ENCODE measurements at regions of chr15 and their contacts with region 1.

Region 1: DNA sequence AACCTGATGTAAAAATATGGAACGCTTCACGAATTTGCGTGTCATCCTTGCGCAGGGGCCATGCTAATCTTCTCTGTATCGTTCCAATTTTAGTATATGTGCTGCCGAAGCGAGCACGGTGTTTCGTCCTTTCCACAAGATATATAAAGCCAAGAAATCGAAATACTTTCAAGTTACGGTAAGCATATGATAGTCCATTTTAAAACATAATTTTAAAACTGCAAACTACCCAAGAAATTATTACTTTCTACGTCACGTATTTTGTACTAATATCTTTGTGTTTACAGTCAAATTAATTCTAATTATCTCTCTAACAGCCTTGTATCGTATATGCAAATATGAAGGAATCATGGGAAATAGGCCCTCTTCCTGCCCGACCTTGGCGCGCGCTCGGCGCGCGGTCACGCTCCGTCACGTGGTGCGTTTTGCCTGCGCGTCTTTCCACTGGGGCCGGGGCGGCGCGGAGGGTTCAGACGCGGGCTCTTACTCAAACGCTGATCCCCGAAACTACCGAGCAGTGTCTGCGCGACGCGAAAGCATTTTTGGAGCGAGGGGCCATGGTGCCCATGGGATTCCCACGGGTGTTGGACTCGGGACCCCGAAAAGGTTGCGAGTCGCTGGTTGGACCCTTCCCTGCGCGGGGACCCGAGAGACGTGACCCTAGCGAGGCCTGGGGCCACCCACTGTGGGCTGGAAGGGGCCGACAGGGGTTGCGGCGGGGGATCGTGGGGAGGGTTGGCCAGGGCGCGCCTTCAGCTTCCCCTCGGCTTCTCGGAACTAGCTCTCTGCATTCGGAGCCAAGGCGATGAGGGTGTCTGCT is at the start of gene RNU6-1:
- DNase-seq: peak; percentile 81
- ATAC-seq: peak; percentile 91
- H3K4me3 ChIP-seq: peak within 1 kb of the TSS; percentile 59 to 72
- H3K27ac ChIP-seq: peak within 1 kb of the TSS; percentile 47
- H3K4me1 ChIP-seq: peaks cover 5 to 33% of the 10 kb centered on the region in 2 experiments; a peak in 3 of 4 replicates
- H3K27me3 ChIP-seq: no peaks in the 10 kb centered on the region
- CTCF ChIP-seq: no peak
- POLR2A ChIP-seq: no peak
- RAD21 ChIP-seq: no peak
- total RNA-seq, gene RNU6-1: not detected

Region 2: GRCh38 chr15:67240235-67241131 is 599.7 kb before region 1 on chr15:
- CTCF ChIA-PET with region 1: no interaction called
- POLR2A ChIA-PET with region 1: no interaction called
- RAD21 ChIA-PET with region 1: no interaction called
- intact Hi-C with region 1: loop called (anchors 10 kb)
- DNase-seq: peak; percentile 21
- ATAC-seq: peak; percentile 89
- H3K4me3 ChIP-seq: no peak overlapping the region
- H3K27ac ChIP-seq: no peak overlapping the region
- H3K4me1 ChIP-seq: peaks cover 3 to 10% of the 10 kb centered on the region in 2 experiments; a peak in 3 of 4 replicates
- H3K27me3 ChIP-seq: no peaks in the 10 kb centered on the region
- CTCF ChIP-seq: peak; percentile 41 to 72 (median 46); a peak in 5 of 6 replicates
- POLR2A ChIP-seq: no peak
- RAD21 ChIP-seq: peak; percentile 68

Region 3: GRCh38 chr15:67383899-67384298 is 456.2 kb before region 1 on chr15:
- CTCF ChIA-PET with region 1: no interaction called
- POLR2A ChIA-PET with region 1: no interaction called
- RAD21 ChIA-PET with region 1: no interaction called
- intact Hi-C with region 1: loop called (anchors 10 kb)
- DNase-seq: no peak
- ATAC-seq: no peak
- H3K4me3 ChIP-seq: no peak overlapping the region
- H3K27ac ChIP-seq: no peak overlapping the region
- H3K4me1 ChIP-seq: no peaks in the 10 kb centered on the region
- H3K27me3 ChIP-seq: no peaks in the 10 kb centered on the region
- CTCF ChIP-seq: peak; percentile 17 to 31 (median 19); a peak in 2 of 6 replicates
- POLR2A ChIP-seq: no peak
- RAD21 ChIP-seq: peak; percentile 44

Region 4: DNA sequence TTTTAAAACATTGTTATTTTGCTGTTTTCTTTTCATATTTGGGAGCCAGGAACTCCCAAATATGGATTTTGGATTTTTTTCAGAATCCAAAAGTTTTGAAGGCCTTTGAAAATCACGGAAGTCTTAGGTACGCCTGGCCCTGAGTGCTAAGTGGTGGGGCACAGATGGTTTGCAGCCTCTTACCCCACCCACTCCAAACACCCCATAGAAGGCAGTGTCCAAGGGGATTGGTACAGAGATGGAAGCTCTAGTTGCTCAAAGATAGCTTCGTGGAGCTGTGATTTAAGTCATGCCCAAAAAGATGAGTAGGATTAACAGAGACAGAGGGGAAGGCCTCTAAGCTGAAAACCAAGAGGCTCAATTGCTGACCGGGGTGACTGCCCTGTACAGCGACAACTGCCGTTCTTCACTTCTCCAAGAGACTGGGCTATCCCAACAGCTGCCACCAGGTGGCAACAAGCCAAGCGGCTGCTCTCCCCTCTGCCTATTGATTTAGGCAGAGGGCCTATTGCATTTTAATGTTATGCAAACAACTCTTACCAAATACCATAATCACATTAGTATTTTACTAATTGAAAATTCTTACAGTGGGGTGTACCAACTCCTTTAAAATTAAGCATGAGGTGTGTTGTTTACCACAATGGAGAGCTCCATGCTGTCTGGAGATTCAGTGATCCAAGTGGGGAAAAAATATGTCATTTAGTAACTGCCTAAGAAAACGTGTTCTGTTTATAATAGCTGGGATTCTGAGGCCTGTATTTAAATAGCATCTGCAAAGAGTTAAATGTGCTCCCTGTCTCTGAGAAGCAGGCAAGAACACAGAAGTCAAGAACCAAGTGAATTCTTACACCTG is 383.2 kb before region 1 on chr15:
- CTCF ChIA-PET with region 1: interaction called, 6 read pairs
- POLR2A ChIA-PET with region 1: no interaction called
- RAD21 ChIA-PET with region 1: no interaction called
- intact Hi-C with region 1: loop called (anchors 1 kb)
- DNase-seq: peak; percentile 42
- ATAC-seq: peak; percentile 99
- H3K4me3 ChIP-seq: no peak overlapping the region
- H3K27ac ChIP-seq: no peak overlapping the region
- H3K4me1 ChIP-seq: no peaks in the 10 kb centered on the region
- H3K27me3 ChIP-seq: no peaks in the 10 kb centered on the region
- CTCF ChIP-seq: peak; percentile 71 to 95 (median 93)
- POLR2A ChIP-seq: no peak
- RAD21 ChIP-seq: peak; percentile 75

Region 5: DNA sequence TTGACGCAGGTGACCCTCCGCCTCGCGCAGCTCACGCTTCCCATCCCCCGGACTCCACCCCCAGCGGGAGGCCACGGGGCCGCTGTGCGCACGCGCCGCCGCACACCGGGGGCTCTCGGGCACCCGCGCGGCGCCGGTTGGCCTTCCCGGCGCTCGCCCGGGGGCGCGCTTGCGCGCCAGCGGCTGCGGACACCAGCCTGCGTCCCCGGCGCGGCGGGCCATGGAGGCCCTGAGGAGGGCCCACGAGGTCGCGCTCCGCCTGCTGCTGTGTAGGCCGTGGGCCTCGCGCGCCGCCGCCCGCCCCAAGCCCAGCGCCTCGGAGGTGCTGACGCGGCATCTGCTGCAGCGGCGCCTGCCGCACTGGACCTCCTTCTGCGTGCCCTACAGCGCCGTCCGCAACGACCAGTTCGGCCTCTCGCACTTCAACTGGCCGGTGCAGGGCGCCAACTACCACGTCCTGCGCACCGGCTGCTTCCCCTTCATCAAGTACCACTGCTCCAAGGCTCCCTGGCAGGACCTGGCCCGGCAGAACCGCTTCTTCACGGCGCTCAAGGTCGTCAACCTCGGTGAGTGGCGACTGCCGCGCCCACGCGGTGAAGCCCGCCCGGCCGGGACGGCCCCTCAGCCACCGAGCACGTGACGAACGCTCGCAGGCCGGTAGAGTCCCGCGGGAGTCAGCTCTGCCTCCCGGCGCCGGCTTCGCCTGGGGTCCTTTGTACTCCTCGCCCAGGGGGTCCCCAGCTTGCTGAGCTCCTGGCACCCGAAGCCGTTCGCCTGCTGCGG is 318.9 kb before region 1 on chr15 and contains the start of gene C15orf61:
- CTCF ChIA-PET with region 1: no interaction called
- POLR2A ChIA-PET with region 1: no interaction called
- RAD21 ChIA-PET with region 1: no interaction called
- intact Hi-C with region 1: loop called (anchors 10 kb)
- DNase-seq: peak; percentile 85
- ATAC-seq: peak; percentile 90
- H3K4me3 ChIP-seq: peak within 1 kb of the TSS; percentile 72 to 91
- H3K27ac ChIP-seq: peak within 1 kb of the TSS; percentile 99
- H3K4me1 ChIP-seq: peaks cover 10 to 19% of the 10 kb centered on the region in 2 experiments
- H3K27me3 ChIP-seq: no peaks in the 10 kb centered on the region
- CTCF ChIP-seq: no peak
- POLR2A ChIP-seq: peak; percentile 64
- RAD21 ChIP-seq: peak; percentile 22; the same call in 1 of the 2 replicates
- total RNA-seq, gene C15orf61: 9.9 TPM

Measured in HCT116 (cell line).